ENCODE measurements at regions of chr20 and their contacts with region 1.

Region 1: GRCh38 chr20:31822421-31823330 is 3.5 kb downstream of the MYLK2 start:
- DNase-seq: peak; percentile 73 to 90 (median 89)
- ATAC-seq: peak; percentile 81 to 83
- H3K4me3 ChIP-seq: no peak overlapping the region
- H3K27ac ChIP-seq: peak overlapping the region; percentile 25
- H3K4me1 ChIP-seq: no peaks in the 10 kb centered on the region
- H3K27me3 ChIP-seq: no peaks in the 10 kb centered on the region

Region 2: DNA sequence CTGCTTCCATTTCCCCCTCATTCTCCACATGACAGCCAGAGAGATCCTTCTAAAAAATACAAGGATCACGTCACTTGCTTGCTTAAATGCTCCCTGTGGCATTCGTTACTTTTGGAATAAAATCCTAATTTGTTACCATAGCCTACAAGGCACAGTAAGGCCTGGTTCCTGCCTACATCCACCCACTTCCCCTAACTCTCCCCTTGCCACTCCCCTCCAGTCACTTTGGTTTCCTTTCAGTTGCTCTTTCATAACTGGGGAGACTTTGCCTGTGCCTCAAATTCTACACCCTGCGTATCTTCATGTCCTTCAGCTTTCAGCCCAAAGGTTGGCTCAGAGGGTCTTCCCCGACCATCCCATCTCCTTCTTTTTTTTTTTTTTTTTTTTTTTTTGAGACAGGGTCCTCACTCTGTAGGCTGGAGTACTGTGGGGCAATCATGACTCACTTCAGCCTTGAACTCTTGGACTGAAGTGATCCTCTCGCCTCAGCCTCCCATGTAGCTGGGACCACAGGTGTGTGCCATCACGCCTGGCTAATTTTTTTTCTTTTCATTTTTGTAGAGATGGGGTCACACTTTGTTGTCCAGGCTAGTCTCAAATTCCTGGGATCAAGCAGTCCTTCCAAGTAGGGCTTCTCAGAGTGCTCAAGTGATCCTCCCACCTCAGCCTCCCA is 205.1 kb before region 1 on chr20:
- intact Hi-C with region 1: no loop called
- DNase-seq: peak in 2 of 3 donors; percentile 4 to 11
- ATAC-seq: no peak
- H3K4me3 ChIP-seq: no peak overlapping the region
- H3K27ac ChIP-seq: no peak overlapping the region
- H3K4me1 ChIP-seq: peaks cover 3% of the 10 kb centered on the region
- H3K27me3 ChIP-seq: no peaks in the 10 kb centered on the region

Region 3: DNA sequence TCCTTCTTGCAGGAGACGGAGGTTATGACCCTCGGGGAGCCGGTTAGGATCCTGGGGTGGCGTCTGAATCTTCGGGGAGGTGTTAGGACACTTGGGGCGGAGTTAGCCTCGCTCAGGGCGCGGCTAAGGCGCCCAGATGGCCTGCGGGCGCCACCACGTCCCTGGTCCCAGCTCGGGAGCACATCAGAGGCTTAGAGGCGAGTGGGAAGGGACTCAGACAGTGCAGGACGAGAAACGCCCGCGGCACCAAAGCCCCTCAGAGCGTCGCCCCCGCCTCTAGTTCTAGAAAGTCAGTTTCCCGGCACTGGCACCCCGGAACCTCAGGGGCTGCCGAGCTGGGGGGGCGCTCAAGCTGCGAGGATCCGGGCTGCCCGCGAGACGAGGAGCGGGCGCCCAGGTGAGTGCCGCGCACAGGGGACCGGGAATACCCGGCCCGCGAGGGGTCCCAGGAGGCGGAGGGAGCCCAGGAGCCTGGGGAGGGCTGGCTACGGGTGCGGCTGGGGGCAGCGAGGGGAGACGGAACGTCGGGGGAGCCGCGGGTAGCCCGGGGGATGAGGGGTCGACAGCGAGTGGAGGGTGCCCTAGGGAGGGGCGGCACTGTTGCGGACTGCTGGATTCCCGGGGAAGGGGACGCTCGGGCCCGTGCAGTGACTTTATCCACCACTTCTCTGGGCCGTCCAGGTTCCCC is 229.6 kb after region 1 on chr20 and contains the start of gene HCK:
- intact Hi-C with region 1: no loop called
- DNase-seq: peak; percentile 56 to 79 (median 78)
- ATAC-seq: peak; percentile 71 to 81
- H3K4me3 ChIP-seq: peak within 1 kb of the TSS; percentile 45
- H3K27ac ChIP-seq: no peak within 1 kb of the TSS
- H3K4me1 ChIP-seq: no peaks in the 10 kb centered on the region
- H3K27me3 ChIP-seq: no peaks in the 10 kb centered on the region
- total RNA-seq, gene HCK: 5.1 to 9.0 (median 7.8) TPM

Region 4: GRCh38 chr20:32067234-32067821 is 244.7 kb after region 1 on chr20:
- intact Hi-C with region 1: no loop called
- DNase-seq: no peak
- ATAC-seq: no peak
- H3K4me3 ChIP-seq: no peak overlapping the region
- H3K27ac ChIP-seq: no peak overlapping the region
- H3K4me1 ChIP-seq: no peaks in the 10 kb centered on the region
- H3K27me3 ChIP-seq: no peaks in the 10 kb centered on the region

Region 5: DNA sequence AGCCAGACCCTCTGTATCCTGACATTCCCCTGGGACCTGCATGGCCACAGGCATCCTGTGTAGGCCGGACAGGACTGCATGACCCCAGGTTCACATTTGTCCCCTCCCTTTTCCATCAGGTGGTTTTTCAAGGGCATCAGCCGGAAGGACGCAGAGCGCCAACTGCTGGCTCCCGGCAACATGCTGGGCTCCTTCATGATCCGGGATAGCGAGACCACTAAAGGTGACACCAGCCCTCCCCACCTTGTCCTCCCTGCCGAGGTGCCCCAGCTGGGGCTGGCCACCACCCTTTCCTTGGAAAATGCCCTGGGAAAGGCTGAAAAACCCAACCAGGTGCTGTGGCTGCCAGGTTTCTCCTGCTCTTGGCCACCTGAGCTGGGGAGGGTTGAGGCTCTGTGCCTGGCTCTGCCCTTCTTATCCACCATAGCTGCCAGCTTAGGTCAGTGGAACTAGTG is 257.0 kb after region 1 on chr20:
- intact Hi-C with region 1: loop called in 1 of 4 experiments (anchors 5 kb)
- DNase-seq: no peak
- ATAC-seq: no peak
- H3K4me3 ChIP-seq: no peak overlapping the region
- H3K27ac ChIP-seq: no peak overlapping the region
- H3K4me1 ChIP-seq: no peaks in the 10 kb centered on the region
- H3K27me3 ChIP-seq: no peaks in the 10 kb centered on the region

Measured in right cardiac atrium (tissue), 5 donors.